ENCODE measurements at regions of chr11 and their contacts with region 1.

Region 1: GRCh38 chr11:11931461-11932055 is 76.9 kb downstream of the DKK3 start:
- DNase-seq: peak; percentile 24
- ATAC-seq: no peak
- H3K4me3 Mint-ChIP-seq: no peak overlapping the region
- H3K27ac Mint-ChIP-seq: no peak overlapping the region
- H3K4me1 Mint-ChIP-seq: peaks cover under 1% of the 10 kb centered on the region
- H3K27me3 Mint-ChIP-seq: no peaks in the 10 kb centered on the region
- CTCF ChIP-seq: peak; percentile 72

Region 2: GRCh38 chr11:11916981-11917399 is 14.6 kb before region 1 on chr11:
- CTCF ChIA-PET with region 1: interaction called, 12 read pairs
- POLR2A ChIA-PET with region 1: no interaction called
- intact Hi-C with region 1: no loop called
- DNase-seq: no peak
- ATAC-seq: no peak
- H3K4me3 Mint-ChIP-seq: no peak overlapping the region
- H3K27ac Mint-ChIP-seq: no peak overlapping the region
- H3K4me1 Mint-ChIP-seq: no peaks in the 10 kb centered on the region
- H3K27me3 Mint-ChIP-seq: no peaks in the 10 kb centered on the region
- CTCF ChIP-seq: no peak

Region 3: DNA sequence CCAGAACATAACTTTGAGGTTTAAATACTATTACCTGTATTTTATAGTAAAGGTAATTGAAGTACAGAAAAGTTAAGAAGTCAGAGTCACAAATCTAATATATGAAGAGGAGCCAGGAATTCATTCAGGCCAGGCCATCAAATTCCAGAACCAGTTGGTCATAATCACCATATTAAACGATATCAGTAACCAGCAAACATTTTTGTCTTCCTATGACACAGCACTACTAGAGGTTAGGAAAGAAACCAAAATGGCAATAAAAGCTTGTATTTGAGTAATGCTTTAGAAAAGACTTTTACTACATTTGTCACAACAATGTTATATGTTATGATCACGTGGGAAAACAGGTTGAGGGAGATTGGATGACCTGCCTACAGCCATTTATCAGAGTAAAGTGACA is 14.6 kb after region 1 on chr11:
- CTCF ChIA-PET with region 1: interaction called, 19 read pairs
- POLR2A ChIA-PET with region 1: no interaction called
- intact Hi-C with region 1: no loop called
- DNase-seq: no peak
- ATAC-seq: no peak
- H3K4me3 Mint-ChIP-seq: no peak overlapping the region
- H3K27ac Mint-ChIP-seq: no peak overlapping the region
- H3K4me1 Mint-ChIP-seq: no peaks in the 10 kb centered on the region
- H3K27me3 Mint-ChIP-seq: no peaks in the 10 kb centered on the region
- CTCF ChIP-seq: no peak

Measured in activated CD8-positive, alpha-beta T cell treated with anti-CD3 and anti-CD28 coated beads for 36 hours (primary cell).